ENCODE measurements at regions of chr4 and their contacts with region 1.

Region 1: DNA sequence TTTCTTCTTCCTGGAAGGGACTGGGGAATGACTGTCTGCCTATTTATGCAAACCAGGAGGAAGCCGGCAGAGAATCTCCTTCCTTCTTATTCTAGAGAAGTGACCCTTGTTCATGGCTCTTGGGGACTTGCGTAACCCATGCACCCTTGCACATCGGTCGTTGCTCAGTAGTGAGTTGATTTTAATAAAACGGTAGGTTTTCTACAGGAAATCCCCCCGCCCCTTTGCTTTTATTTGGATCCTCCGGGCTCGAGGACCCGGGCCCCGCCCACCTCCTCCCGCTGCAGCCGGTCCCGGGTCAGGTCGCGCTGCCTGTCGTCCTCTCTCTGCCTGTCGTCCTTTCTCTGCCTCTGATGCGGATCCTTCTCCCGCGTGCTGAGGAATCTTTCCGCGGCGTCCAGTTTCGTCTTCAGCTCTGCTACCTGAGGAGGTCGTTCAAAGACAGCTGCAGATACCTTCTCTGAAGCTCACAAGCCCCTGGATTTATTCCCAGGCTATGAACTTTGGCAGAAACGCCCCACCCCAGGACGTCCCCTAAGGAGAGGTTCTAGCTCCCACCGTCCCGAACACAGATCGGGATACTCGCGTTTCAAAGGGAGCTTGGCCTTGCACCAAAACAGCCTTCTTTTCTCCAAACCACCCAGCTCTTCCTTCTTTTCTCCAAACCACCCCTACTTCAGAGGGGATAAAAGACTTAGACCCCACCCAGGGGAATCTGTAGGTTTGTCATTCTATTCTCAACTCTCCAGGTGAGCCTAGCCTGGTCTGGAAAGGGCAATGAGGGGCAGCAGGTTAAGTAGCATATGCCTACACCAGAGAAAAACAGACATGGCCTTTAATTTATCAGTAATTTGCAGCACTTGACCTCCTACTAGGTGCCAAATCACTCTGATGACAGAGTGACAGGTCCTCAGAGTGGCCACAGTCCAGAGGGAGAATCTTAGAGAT is 7.0 kb downstream of the TNIP3 start:
- DNase-seq: peak; percentile 75
- H3K4me3 Mint-ChIP-seq: peak overlapping the region; percentile 80
- H3K27ac Mint-ChIP-seq: no peak overlapping the region
- H3K4me1 Mint-ChIP-seq: peaks cover 39% of the 10 kb centered on the region
- H3K27me3 Mint-ChIP-seq: peaks cover 19% of the 10 kb centered on the region

Region 2: GRCh38 chr4:121041307-121042090 is 115.6 kb before region 1 on chr4:
- intact Hi-C with region 1: loop called (anchors 1 kb)
- DNase-seq: peak; percentile 72
- H3K4me3 Mint-ChIP-seq: no peak overlapping the region
- H3K27ac Mint-ChIP-seq: peak overlapping the region; percentile 0
- H3K4me1 Mint-ChIP-seq: peaks cover 11% of the 10 kb centered on the region
- H3K27me3 Mint-ChIP-seq: peaks cover 49% of the 10 kb centered on the region

Region 3: GRCh38 chr4:121139533-121140222 is 17.4 kb before region 1 on chr4:
- intact Hi-C with region 1: loop called (anchors 1 kb)
- DNase-seq: no peak
- H3K4me3 Mint-ChIP-seq: peak overlapping the region; percentile 26
- H3K27ac Mint-ChIP-seq: peak overlapping the region; percentile 78
- H3K4me1 Mint-ChIP-seq: peaks cover 45% of the 10 kb centered on the region
- H3K27me3 Mint-ChIP-seq: peaks cover 1% of the 10 kb centered on the region

Region 4: GRCh38 chr4:121227341-121227792 is 70.3 kb after region 1 on chr4:
- intact Hi-C with region 1: loop called (anchors 1 kb)
- DNase-seq: no peak
- H3K4me3 Mint-ChIP-seq: peak overlapping the region; percentile 63
- H3K27ac Mint-ChIP-seq: peak overlapping the region; percentile 19
- H3K4me1 Mint-ChIP-seq: peaks cover 18% of the 10 kb centered on the region
- H3K27me3 Mint-ChIP-seq: peaks cover 3% of the 10 kb centered on the region

Measured in activated CD4-positive, alpha-beta T cell treated with anti-CD3 and anti-CD28 coated beads, Interleukin-2, amount 10 ng/mL, durations not matched to agents 24 days and 14 days (primary cell).